ENCODE measurements at regions of chr7 and their contacts with region 1.

Region 1: DNA sequence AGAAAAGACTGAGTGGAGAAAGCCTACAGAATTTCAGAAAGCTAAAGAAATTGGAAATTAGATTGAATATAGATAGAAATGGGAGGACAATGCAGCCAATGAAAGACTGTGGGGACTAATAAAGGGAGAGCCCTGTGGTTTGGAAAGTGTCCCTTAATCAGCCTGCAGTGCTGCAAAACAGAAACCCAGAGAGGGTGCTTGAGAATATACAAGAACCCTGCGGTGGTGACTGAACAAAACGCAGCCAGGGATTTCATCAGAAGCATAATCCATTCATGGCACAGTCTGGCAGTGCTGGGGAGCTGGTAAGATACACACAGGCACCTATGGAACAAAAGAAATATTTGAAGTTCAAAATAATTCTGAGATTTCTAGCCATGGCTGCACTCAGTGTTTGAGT is 19.1 kb downstream of the CEP41 start:
- DNase-seq: no peak
- H3K4me3 Mint-ChIP-seq: peak overlapping the region; percentile 36
- H3K27ac Mint-ChIP-seq: peak overlapping the region; percentile 43
- H3K4me1 Mint-ChIP-seq: peaks cover 38% of the 10 kb centered on the region
- H3K27me3 Mint-ChIP-seq: no peaks in the 10 kb centered on the region

Region 2: GRCh38 chr7:130379921-130380860 is 41.5 kb before region 1 on chr7 and contains the start of gene CPA1:
- intact Hi-C with region 1: no loop called
- DNase-seq: no peak
- H3K4me3 Mint-ChIP-seq: no peak within 1 kb of the TSS
- H3K27ac Mint-ChIP-seq: no peak within 1 kb of the TSS
- H3K4me1 Mint-ChIP-seq: no peaks in the 10 kb centered on the region
- H3K27me3 Mint-ChIP-seq: no peaks in the 10 kb centered on the region
- total RNA-seq, gene CPA1: not detected in 2 replicates

Region 3: DNA sequence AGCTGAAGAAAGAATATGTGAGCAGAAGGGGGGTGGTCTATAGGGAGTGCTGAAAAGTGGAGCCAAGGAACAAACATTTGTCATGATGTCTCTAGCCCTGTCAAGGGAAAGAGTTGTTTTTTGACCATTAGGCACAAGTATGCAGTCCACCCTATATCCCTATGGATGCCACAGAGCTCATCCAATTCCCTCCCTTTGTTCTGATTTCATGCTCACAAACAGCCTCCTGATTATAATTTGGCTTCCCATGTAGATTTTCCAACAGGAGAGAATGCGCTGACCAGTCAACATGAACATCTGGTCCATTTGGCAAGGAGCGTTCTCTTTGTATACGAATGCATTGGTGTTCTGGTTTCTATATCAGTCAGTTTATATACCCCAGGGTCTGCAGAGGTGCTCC is 31.3 kb after region 1 on chr7:
- intact Hi-C with region 1: no loop called
- DNase-seq: no peak
- H3K4me3 Mint-ChIP-seq: no peak overlapping the region
- H3K27ac Mint-ChIP-seq: no peak overlapping the region
- H3K4me1 Mint-ChIP-seq: peaks cover 9% of the 10 kb centered on the region
- H3K27me3 Mint-ChIP-seq: no peaks in the 10 kb centered on the region

Region 4: DNA sequence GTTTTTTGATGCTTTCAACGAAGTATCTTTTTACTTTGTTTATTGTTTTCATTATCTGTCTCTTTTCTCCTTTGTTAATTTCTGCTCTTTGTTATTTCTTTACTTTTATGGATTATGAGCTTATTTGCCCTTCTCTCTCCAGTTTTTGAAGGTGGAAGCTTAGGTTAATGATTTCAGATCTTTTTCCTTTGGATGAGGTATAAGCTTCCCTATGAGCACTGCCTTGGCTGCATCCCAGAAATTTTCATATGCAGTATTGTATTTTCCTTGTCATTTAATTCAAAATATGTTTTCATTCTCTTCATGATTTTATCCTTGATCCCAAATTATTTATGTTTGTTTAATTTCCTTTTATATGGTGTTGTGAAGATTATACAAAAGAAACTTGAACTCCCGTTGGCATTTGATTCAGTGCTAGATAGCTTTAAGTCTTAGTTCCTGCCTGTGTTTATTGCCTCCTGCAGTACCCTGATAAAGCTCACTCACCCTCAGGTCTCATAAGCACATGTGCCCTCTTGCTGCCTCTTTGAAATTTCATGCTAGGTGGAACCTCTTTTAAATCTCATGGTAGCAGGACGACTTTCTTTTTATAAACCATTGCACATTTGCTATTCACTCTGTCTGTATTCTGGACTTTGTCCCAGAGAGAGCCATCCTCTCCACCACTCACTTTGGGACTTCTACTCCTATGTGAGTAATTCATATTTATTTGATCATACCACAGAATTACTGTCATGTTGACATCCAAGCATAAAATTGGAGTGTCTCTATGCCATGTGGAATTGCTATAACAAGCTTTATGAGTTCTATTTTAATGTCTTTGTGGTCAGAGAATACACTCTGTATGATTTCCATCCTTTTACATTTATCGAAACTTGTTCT is 42.1 kb after region 1 on chr7:
- intact Hi-C with region 1: loop called (anchors 5 kb)
- DNase-seq: no peak
- H3K4me3 Mint-ChIP-seq: no peak overlapping the region
- H3K27ac Mint-ChIP-seq: no peak overlapping the region
- H3K4me1 Mint-ChIP-seq: peaks cover 2% of the 10 kb centered on the region
- H3K27me3 Mint-ChIP-seq: peaks cover 12% of the 10 kb centered on the region

Measured in activated CD4-positive, alpha-beta T cell treated with anti-CD3 and anti-CD28 coated beads, Interleukin-2, amount 10 ng/mL, durations not matched to agents 24 days and 14 days (primary cell).